ENCODE measurements at regions of chr3 and their contacts with region 1.

Region 1: GRCh38 chr3:14915636-14916222 is 31.7 kb upstream of the NR2C2 start:
- DNase-seq: no peak
- ATAC-seq: no peak; the same call in 1 of the 2 replicates
- H3K4me3 ChIP-seq: no peak overlapping the region
- H3K27ac ChIP-seq: no peak overlapping the region
- H3K4me1 ChIP-seq: no peaks in the 10 kb centered on the region
- H3K27me3 ChIP-seq: no peaks in the 10 kb centered on the region
- CTCF ChIP-seq: no peak

Region 2: DNA sequence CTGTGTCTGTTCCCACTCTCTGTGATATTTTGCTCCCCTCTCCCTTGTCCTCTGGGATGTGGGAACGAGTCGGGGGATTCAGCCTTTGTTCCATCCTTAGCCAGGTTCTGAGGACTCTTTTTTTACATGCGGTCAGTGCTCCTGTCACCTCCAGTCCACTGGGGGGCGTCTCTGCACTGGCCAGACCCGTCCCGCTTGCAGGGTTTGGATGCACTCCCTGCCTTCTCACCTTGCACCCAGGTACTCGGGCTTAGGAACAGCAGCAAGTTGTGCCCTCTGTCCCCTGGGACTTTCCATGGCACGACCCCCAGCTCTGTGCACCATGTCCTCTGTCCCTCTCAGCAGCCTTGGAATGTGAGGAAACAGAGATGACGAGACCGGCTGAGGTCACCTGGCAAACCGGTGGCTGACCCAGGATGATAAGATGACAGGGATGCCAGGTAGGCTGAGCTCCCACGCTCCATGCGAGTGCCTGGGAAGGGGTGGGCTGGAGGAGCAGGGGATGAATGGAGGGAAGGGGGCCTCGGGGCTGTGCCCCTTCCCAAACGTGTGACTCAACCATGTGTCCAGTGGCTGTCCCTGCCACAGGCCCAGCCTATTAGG is 124.3 kb before region 1 on chr3:
- CTCF ChIA-PET with region 1: interaction called, 4 read pairs
- POLR2A ChIA-PET with region 1: interaction called, 12 read pairs
- in situ Hi-C with region 1: no loop called
- intact Hi-C with region 1: no loop called
- DNase-seq: peak; percentile 12
- ATAC-seq: peak; percentile 91
- H3K4me3 ChIP-seq: no peak overlapping the region
- H3K27ac ChIP-seq: no peak overlapping the region
- H3K4me1 ChIP-seq: no peaks in the 10 kb centered on the region
- H3K27me3 ChIP-seq: no peaks in the 10 kb centered on the region
- CTCF ChIP-seq: peak; percentile 89

Region 3: DNA sequence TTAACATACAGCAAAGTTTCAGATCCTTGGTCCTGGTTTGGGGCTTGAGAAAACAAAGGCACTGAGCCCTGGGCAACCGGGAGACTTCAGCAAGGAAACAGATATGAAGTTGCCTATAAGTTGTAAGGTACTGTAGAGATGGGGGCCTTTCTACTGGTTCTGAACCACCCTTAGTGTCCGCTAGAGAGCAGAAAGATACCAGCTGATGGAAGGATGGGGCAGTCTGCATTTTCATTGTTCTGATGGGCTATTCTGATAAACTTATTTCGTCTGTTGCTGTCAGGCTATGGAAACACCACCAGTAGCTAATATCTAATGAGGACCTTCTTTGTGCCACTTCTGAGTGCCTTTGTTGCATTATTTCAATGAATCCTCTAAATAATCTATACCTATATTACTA is 58.2 kb before region 1 on chr3:
- CTCF ChIA-PET with region 1: interaction called, 4 read pairs
- POLR2A ChIA-PET with region 1: no interaction called
- in situ Hi-C with region 1: no loop called
- intact Hi-C with region 1: loop called (anchors 5 kb)
- DNase-seq: no peak
- ATAC-seq: peak; percentile 75; the same call in 1 of the 2 replicates
- H3K4me3 ChIP-seq: no peak overlapping the region
- H3K27ac ChIP-seq: no peak overlapping the region
- H3K4me1 ChIP-seq: no peaks in the 10 kb centered on the region
- H3K27me3 ChIP-seq: no peaks in the 10 kb centered on the region
- CTCF ChIP-seq: peak; percentile 42

Region 4: DNA sequence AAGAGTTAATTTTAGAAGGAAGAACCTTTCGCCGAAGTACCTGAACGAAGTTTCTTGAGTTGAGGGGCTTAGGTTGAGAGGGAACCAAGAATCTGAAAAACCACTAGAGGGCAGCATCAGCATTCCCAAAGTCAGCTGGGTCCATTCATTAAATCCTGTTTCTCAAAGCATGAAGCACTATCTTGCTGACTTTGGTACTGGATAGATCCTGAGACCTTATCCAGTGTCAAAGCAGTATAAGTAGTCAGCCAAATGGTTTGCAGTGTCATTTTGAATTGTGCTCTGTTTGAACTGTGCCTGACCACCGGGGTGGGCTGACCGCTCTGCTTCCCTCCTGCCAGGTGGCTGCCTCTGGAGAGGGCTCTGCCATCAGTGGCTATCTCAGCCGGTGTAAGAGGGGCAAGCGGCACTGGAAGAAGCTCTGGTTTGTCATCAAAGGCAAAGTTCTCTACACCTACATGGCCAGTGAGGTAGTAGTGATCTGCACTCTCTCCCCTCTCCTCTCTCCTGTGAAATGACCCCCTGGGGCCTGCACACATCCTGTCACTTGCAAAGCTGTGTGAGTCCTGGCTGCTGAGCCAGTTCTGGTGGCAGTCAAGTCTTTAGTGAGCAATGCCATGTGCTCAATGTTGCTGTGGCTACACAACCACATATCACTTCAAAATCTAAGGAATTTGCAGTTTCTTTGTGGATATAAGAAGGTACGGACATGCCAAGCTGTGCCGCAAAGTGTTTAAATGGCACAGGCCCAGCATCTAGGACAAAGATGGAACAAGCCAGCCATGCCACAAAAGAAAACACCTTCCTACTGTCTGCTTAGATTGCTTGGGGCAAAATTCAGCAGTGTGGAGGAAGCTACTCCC is 10.2 kb after region 1 on chr3:
- CTCF ChIA-PET with region 1: no interaction called
- POLR2A ChIA-PET with region 1: no interaction called
- in situ Hi-C with region 1: no loop called
- intact Hi-C with region 1: no loop called
- DNase-seq: peak; percentile 47
- ATAC-seq: peak; percentile 76
- H3K4me3 ChIP-seq: no peak overlapping the region
- H3K27ac ChIP-seq: no peak overlapping the region
- H3K4me1 ChIP-seq: no peaks in the 10 kb centered on the region
- H3K27me3 ChIP-seq: no peaks in the 10 kb centered on the region
- CTCF ChIP-seq: peak; percentile 77